PC-9 (cell line): ENCODE measurements at regions of chr6 and their contacts with region 1.

Region 1: GRCh38 chr6:130322673-130323268 is 43.0 kb upstream of the TMEM200A start:
- DNase-seq: peak; percentile 18 to 42
- H3K4me3 ChIP-seq: no peak overlapping the region
- H3K27ac ChIP-seq: no peak overlapping the region
- H3K4me1 ChIP-seq: no peaks in the 10 kb centered on the region
- H3K27me3 ChIP-seq: no peaks in the 10 kb centered on the region
- CTCF ChIP-seq: peak; percentile 95

Region 2: GRCh38 chr6:130697995-130698535 is 375.3 kb after region 1 on chr6:
- CTCF ChIA-PET with region 1: interaction called, 5 read pairs
- POLR2A ChIA-PET with region 1: no interaction called
- intact Hi-C with region 1: loop called (anchors 1 kb)
- DNase-seq: peak in 1 of 2 experiments; percentile 34
- H3K4me3 ChIP-seq: no peak overlapping the region
- H3K27ac ChIP-seq: no peak overlapping the region
- H3K4me1 ChIP-seq: no peaks in the 10 kb centered on the region
- H3K27me3 ChIP-seq: peaks cover 8% of the 10 kb centered on the region; the same call in 1 of the 2 replicates
- CTCF ChIP-seq: peak; percentile 91

Region 3: DNA sequence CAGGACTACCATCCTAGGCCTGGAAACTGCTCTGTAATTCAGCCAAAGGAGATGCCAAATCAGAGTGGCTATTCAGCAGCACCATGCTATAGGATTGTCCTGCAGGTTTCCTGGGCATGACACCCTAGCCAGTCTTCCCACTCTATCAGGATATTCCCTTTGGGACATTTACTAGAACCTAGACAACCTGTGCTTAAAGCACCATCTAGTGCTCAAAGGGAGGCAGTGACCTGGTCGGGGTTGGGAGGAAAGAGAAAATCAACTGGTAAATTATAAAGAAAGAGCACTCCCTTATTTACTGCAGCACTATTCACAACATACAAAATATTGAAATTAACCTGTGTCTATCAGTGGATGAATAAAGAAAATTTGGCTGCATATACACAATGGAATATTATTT is 437.2 kb after region 1 on chr6:
- CTCF ChIA-PET with region 1: interaction called, 3 read pairs
- POLR2A ChIA-PET with region 1: no interaction called
- intact Hi-C with region 1: loop called (anchors 10 kb)
- DNase-seq: peak in 1 of 2 experiments; percentile 7
- H3K4me3 ChIP-seq: no peak overlapping the region
- H3K27ac ChIP-seq: no peak overlapping the region
- H3K4me1 ChIP-seq: no peaks in the 10 kb centered on the region
- H3K27me3 ChIP-seq: no peaks in the 10 kb centered on the region
- CTCF ChIP-seq: peak; percentile 77

Region 4: GRCh38 chr6:130843575-130844320 is 521.0 kb after region 1 on chr6:
- CTCF ChIA-PET with region 1: interaction called, 5 read pairs
- POLR2A ChIA-PET with region 1: no interaction called
- intact Hi-C with region 1: loop called (anchors 1 kb)
- DNase-seq: no peak
- H3K4me3 ChIP-seq: no peak overlapping the region
- H3K27ac ChIP-seq: no peak overlapping the region
- H3K4me1 ChIP-seq: no peaks in the 10 kb centered on the region
- H3K27me3 ChIP-seq: no peaks in the 10 kb centered on the region
- CTCF ChIP-seq: peak; percentile 82

Region 5: GRCh38 chr6:130872250-130873095 is 549.7 kb after region 1 on chr6:
- CTCF ChIA-PET with region 1: no interaction called
- POLR2A ChIA-PET with region 1: no interaction called
- intact Hi-C with region 1: loop called (anchors 5 kb)
- DNase-seq: peak in 1 of 2 experiments; percentile 49
- H3K4me3 ChIP-seq: no peak overlapping the region
- H3K27ac ChIP-seq: no peak overlapping the region
- H3K4me1 ChIP-seq: no peaks in the 10 kb centered on the region
- H3K27me3 ChIP-seq: no peaks in the 10 kb centered on the region
- CTCF ChIP-seq: peak; percentile 99